ENCODE measurements at regions of chr5 and their contacts with region 1.

Region 1: DNA sequence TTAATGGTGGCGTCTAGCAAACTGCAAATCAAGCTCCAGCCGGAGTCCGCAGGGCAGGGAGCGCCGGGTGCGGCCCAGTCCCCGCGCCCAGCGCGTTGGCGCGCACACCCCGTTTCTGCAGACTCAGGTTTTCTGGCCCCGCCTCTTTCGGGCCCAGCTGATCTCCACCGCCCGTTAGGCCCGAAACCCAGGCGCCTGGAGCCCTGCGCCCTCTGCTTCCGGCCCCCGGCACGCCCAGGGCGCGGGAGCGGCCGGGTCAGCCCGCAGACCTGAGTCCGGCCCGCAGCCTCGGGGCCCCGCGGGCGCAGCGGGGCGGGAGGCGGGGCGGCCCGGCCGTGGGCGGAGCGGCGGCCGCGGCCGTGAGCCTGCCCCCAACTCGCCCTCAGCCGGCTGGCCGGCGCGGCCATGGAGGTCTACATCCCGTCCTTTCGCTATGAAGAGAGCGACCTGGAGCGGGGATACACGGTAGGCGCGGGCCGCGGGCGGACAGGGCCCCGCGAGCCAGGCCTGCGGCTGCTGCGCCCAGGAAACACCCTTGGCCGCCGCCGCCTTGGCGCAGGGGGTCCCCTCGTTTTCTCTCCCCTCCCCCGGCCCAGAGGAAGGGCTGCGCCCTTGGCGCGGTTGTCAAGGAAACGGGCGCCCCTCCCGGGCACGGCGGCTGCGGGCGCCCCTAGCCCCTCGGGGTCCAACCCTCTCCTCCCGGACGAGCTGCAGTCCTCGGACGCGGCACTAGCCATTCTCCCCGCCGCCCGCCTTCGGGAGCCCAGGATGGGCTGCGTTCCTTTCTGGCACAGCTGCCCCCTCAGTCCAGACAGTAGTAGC is at the start of gene SNX24:
- DNase-seq: peak; percentile 81
- H3K4me3 ChIP-seq: peak within 1 kb of the TSS; percentile 76
- H3K27ac ChIP-seq: peak within 1 kb of the TSS; percentile 1
- H3K4me1 ChIP-seq: peaks cover 25% of the 10 kb centered on the region
- CTCF ChIP-seq: no peak
- total RNA-seq, gene SNX24: 5.7 and 6.9 TPM in 2 replicates

Region 2: GRCh38 chr5:122704243-122705036 is 141.0 kb before region 1 on chr5:
- CTCF ChIA-PET with region 1: no interaction called
- POLR2A ChIA-PET with region 1: no interaction called
- intact Hi-C with region 1: loop called (anchors 10 kb)
- DNase-seq: peak; percentile 57
- H3K4me3 ChIP-seq: no peak overlapping the region
- H3K27ac ChIP-seq: no peak overlapping the region
- H3K4me1 ChIP-seq: peaks cover 19% of the 10 kb centered on the region
- CTCF ChIP-seq: peak; percentile 80

Region 3: DNA sequence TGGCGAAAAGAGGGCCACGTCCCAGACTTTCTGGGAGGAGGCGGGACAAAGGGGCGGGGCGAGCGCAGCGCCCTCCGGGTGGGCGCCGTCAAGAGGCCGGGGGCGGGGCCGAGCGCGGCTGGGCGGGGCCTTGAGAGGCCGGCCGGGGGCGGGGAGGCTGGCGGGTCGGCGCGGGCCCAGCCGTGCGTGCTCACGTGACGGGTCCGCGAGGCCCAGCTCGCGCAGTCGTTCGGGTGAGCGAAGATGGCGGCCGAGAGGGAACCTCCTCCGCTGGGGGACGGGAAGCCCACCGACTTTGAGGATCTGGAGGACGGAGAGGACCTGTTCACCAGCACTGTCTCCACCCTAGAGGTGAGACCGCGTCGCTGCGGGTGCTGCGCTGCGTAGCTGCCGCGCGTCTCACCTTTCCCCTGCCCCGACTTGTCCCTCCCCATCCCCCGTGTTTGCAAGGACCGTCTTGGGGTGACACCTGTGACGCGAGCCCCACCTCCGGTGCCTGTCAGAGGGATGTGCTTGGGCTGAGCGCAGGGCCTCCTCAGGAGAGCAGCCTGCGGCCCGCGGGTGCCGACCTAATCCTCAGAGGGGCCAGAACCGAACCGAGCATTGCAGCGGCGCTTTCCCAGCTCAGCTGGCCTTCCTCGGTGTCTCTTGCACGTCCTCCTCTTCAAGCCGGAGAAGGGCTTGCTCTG is 70.4 kb before region 1 on chr5 and contains the start of gene SNX2:
- CTCF ChIA-PET with region 1: no interaction called
- POLR2A ChIA-PET with region 1: no interaction called
- intact Hi-C with region 1: loop called (anchors 1 kb)
- DNase-seq: peak; percentile 91
- H3K4me3 ChIP-seq: peak within 1 kb of the TSS; percentile 88
- H3K27ac ChIP-seq: peak within 1 kb of the TSS; percentile 57
- H3K4me1 ChIP-seq: peaks cover 21% of the 10 kb centered on the region
- CTCF ChIP-seq: no peak
- total RNA-seq, gene SNX2: 46.0 and 47.1 TPM in 2 replicates

Region 4: GRCh38 chr5:122831984-122832383 is 13.5 kb before region 1 on chr5:
- CTCF ChIA-PET with region 1: no interaction called
- POLR2A ChIA-PET with region 1: interaction called, 10 read pairs
- intact Hi-C with region 1: no loop called
- DNase-seq: no peak
- H3K4me3 ChIP-seq: no peak overlapping the region
- H3K27ac ChIP-seq: no peak overlapping the region
- H3K4me1 ChIP-seq: no peaks in the 10 kb centered on the region
- CTCF ChIP-seq: no peak

Region 5: DNA sequence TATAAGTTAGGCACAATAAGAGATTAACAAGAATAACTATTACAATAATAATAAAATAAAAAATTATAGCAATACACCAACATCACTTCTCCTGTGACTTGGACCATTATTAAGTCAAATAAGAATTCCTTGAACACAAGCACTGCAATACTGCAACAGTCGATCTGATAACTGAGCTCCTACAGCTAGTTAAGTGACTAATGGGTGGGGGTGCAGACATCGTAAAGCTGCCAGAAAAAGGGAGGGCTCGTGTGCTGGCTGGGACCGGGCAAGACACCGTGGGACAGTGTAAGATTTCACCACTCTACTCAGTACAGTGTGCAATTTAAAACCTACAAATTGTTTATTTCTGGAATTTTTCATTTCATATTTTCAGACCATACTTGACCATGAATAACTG is 78.8 kb after region 1 on chr5:
- CTCF ChIA-PET with region 1: no interaction called
- POLR2A ChIA-PET with region 1: no interaction called
- intact Hi-C with region 1: no loop called
- DNase-seq: no peak
- H3K4me3 ChIP-seq: no peak overlapping the region
- H3K27ac ChIP-seq: no peak overlapping the region
- H3K4me1 ChIP-seq: no peaks in the 10 kb centered on the region
- CTCF ChIP-seq: no peak

Measured in OCI-LY7 (cell line).